ENCODE measurements at regions of chr13 and their contacts with region 1.

Region 1: GRCh38 chr13:20197361-20197834 is 4.7 kb upstream of the GJB2 start:
- DNase-seq: peak in 5 of 14 experiments; percentile 19 to 76 (median 43)
- ATAC-seq: peak; percentile 69
- H3K4me3 ChIP-seq: no peak overlapping the region
- H3K4me3 Mint-ChIP-seq: no peak overlapping the region
- H3K27ac ChIP-seq: no peak overlapping the region
- H3K27ac Mint-ChIP-seq: no peak overlapping the region
- H3K4me1 ChIP-seq: peaks cover 20% of the 10 kb centered on the region
- H3K4me1 Mint-ChIP-seq: peaks cover 25% of the 10 kb centered on the region
- H3K27me3 ChIP-seq: peaks cover 37 to 51% of the 10 kb centered on the region in 2 experiments
- H3K27me3 Mint-ChIP-seq: peaks cover 43% of the 10 kb centered on the region
- CTCF ChIP-seq: peak; percentile 87

Region 2: GRCh38 chr13:20182231-20182846 is 15.1 kb before region 1 on chr13:
- CTCF ChIA-PET with region 1: interaction called, 17 read pairs
- POLR2A ChIA-PET with region 1: interaction called, 3 read pairs
- intact Hi-C with region 1: no loop called
- DNase-seq: peak in 11 of 14 experiments; percentile 26 to 87 (median 46)
- ATAC-seq: peak; percentile 100
- H3K4me3 ChIP-seq: no peak overlapping the region
- H3K4me3 Mint-ChIP-seq: no peak overlapping the region
- H3K27ac ChIP-seq: no peak overlapping the region
- H3K27ac Mint-ChIP-seq: no peak overlapping the region
- H3K4me1 ChIP-seq: peaks cover 2% of the 10 kb centered on the region
- H3K4me1 Mint-ChIP-seq: no peaks in the 10 kb centered on the region
- H3K27me3 ChIP-seq: peaks cover 17 to 20% of the 10 kb centered on the region in 2 experiments
- H3K27me3 Mint-ChIP-seq: peaks cover 48% of the 10 kb centered on the region
- CTCF ChIP-seq: peak; percentile 84

Region 3: DNA sequence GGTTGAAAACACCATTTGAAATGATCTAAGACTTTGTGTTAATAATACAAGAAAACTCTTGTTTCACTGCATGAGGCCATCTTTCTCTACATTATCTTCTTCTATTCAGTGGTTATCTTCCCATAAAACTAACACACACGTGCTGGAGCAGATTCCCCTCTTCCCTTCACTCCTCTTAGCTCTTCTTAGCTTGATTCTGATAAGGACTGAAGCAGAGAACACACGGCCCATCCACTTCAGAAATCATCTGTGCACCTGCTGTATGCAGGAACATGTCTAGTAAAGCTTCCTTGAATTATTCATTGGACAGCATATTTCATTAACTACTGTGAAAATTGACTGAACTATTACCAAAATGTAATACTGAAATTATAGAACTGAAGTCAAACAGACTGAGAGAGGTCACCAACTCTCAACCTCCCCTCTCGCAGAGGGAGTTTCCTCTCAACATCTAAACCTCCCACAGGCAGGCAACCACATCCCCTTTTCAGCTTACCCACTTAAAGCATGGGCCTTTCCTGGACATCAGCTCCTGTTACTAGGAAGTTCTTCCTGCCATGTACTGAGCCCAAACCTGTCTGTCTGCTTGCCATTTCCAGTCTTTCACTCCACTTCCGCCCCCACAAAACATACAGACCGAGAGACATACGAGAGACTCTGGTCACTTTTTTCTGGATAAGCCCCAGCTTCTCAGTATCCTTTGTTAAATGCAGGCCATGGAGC is 214.4 kb after region 1 on chr13:
- CTCF ChIA-PET with region 1: no interaction called
- POLR2A ChIA-PET with region 1: no interaction called
- intact Hi-C with region 1: loop called in 1 of 2 experiments (anchors 2 kb)
- DNase-seq: peak in 6 of 14 experiments; percentile 9 to 77 (median 44)
- ATAC-seq: peak; percentile 75
- H3K4me3 ChIP-seq: no peak overlapping the region
- H3K4me3 Mint-ChIP-seq: peak overlapping the region; percentile 61
- H3K27ac ChIP-seq: no peak overlapping the region
- H3K27ac Mint-ChIP-seq: peak overlapping the region; percentile 84
- H3K4me1 ChIP-seq: peaks cover 20% of the 10 kb centered on the region
- H3K4me1 Mint-ChIP-seq: peaks cover 22% of the 10 kb centered on the region
- H3K27me3 ChIP-seq: no peaks in the 10 kb centered on the region
- H3K27me3 Mint-ChIP-seq: no peaks in the 10 kb centered on the region
- CTCF ChIP-seq: no peak

Region 4: GRCh38 chr13:20489185-20489820 is 291.9 kb after region 1 on chr13:
- CTCF ChIA-PET with region 1: interaction called, 15 read pairs
- POLR2A ChIA-PET with region 1: interaction called, 18 read pairs
- intact Hi-C with region 1: loop called (anchors 1 kb)
- DNase-seq: peak in 6 of 14 experiments; percentile 41 to 75 (median 60)
- ATAC-seq: peak; percentile 96
- H3K4me3 ChIP-seq: no peak overlapping the region
- H3K4me3 Mint-ChIP-seq: no peak overlapping the region
- H3K27ac ChIP-seq: no peak overlapping the region
- H3K27ac Mint-ChIP-seq: no peak overlapping the region
- H3K4me1 ChIP-seq: no peaks in the 10 kb centered on the region
- H3K4me1 Mint-ChIP-seq: peaks cover 10% of the 10 kb centered on the region
- H3K27me3 ChIP-seq: no peaks in the 10 kb centered on the region
- H3K27me3 Mint-ChIP-seq: no peaks in the 10 kb centered on the region
- CTCF ChIP-seq: peak; percentile 86

Region 5: GRCh38 chr13:20703780-20704445 is 506.5 kb after region 1 on chr13:
- CTCF ChIA-PET with region 1: no interaction called
- POLR2A ChIA-PET with region 1: no interaction called
- intact Hi-C with region 1: loop called in 1 of 2 experiments (anchors 10 kb)
- DNase-seq: peak; percentile 50 to 91 (median 70)
- ATAC-seq: peak; percentile 91
- H3K4me3 ChIP-seq: no peak overlapping the region
- H3K4me3 Mint-ChIP-seq: no peak overlapping the region
- H3K27ac ChIP-seq: no peak overlapping the region
- H3K27ac Mint-ChIP-seq: no peak overlapping the region
- H3K4me1 ChIP-seq: peaks cover 14% of the 10 kb centered on the region
- H3K4me1 Mint-ChIP-seq: peaks cover 7% of the 10 kb centered on the region
- H3K27me3 ChIP-seq: peaks cover 18 to 33% of the 10 kb centered on the region in 2 experiments
- H3K27me3 Mint-ChIP-seq: peaks cover 35% of the 10 kb centered on the region
- CTCF ChIP-seq: peak; percentile 21

Region 6: GRCh38 chr13:20828539-20829364 is 631.4 kb after region 1 on chr13:
- CTCF ChIA-PET with region 1: no interaction called
- POLR2A ChIA-PET with region 1: no interaction called
- intact Hi-C with region 1: loop called (anchors 5 to 10 kb)
- DNase-seq: peak in 9 of 14 experiments; percentile 4 to 79 (median 25)
- ATAC-seq: peak; percentile 95
- H3K4me3 ChIP-seq: peak overlapping the region; percentile 13
- H3K4me3 Mint-ChIP-seq: peak overlapping the region; percentile 12
- H3K27ac ChIP-seq: no peak overlapping the region
- H3K27ac Mint-ChIP-seq: peak overlapping the region; percentile 48
- H3K4me1 ChIP-seq: no peaks in the 10 kb centered on the region
- H3K4me1 Mint-ChIP-seq: peaks cover 12% of the 10 kb centered on the region
- H3K27me3 ChIP-seq: no peaks in the 10 kb centered on the region
- H3K27me3 Mint-ChIP-seq: no peaks in the 10 kb centered on the region
- CTCF ChIP-seq: peak; percentile 79